Ovary (tissue), 10 donors: ENCODE measurements at regions of chr16 and their contacts with region 1.

Region 1: DNA sequence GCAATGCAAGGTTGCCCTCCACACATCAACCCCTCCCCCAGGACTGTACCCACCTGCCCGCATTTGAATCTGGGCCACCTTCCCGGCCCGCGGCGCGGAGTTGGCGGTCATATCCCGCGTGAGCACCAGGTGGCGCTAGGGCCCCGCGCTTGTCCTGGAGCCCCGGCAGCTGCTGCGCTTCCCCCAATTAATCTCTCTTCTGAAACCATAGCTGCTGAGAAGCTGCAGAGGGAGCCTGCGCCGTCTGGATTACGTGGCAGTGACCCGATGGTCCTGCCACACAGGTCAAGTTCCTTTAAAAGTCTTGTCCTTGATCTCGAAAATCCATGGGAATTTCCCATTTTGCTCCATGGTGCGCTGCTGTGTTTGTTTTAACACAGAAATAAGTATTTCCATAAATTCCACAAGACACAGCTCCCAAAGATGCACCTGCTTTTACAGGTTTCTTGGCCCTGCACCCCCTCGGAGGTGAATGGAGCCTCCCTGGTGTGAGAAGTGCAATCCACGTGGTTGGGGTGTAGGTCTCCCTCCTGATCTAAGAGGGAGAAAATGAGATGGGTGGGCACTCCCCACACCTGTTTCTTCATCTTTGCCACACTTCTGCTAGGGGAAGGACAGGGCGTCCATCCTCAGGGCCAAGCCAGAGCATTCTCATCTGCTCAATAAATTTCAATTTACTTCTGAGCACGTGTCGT is 22.1 kb downstream of the COX4I1 start:
- DNase-seq: peak; percentile 57 to 85 (median 72)
- H3K4me3 ChIP-seq: no peak overlapping the region
- H3K27ac ChIP-seq: no peak overlapping the region
- H3K4me1 ChIP-seq: no peaks in the 10 kb centered on the region
- H3K27me3 ChIP-seq: no peaks in the 10 kb centered on the region
- CTCF ChIP-seq: peak; percentile 81 to 97 (median 96)
- EP300 ChIP-seq: no peak
- POLR2A ChIP-seq: no peak

Region 2: DNA sequence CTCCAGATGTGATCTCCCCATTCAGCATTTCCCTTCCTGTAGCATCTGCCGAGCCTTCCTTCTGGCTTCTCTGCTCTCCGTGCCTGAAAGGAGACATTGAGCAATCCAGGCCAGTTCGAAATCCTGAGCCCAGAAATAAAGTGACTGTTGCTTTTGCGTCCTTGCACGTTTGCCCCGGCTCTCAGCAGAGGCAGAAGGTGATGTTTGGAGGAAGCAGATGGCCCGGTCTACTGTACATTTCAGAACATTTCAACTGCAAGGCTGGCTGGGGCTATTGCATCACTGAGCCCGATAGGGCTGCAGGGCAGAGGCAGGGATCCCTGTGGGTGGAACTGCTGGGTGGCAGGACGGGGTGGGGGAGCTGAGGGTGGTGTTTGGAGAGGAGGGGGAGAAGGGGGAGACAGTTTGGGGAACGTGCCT is 106.8 kb after region 1 on chr16:
- intact Hi-C with region 1: loop called in 1 of 4 experiments (anchors 10 kb)
- DNase-seq: peak; percentile 30 to 64 (median 56)
- H3K4me3 ChIP-seq: no peak overlapping the region
- H3K27ac ChIP-seq: no peak overlapping the region
- H3K4me1 ChIP-seq: peaks cover 12% of the 10 kb centered on the region
- H3K27me3 ChIP-seq: no peaks in the 10 kb centered on the region
- CTCF ChIP-seq: no peak
- EP300 ChIP-seq: no peak
- POLR2A ChIP-seq: no peak

Region 3: DNA sequence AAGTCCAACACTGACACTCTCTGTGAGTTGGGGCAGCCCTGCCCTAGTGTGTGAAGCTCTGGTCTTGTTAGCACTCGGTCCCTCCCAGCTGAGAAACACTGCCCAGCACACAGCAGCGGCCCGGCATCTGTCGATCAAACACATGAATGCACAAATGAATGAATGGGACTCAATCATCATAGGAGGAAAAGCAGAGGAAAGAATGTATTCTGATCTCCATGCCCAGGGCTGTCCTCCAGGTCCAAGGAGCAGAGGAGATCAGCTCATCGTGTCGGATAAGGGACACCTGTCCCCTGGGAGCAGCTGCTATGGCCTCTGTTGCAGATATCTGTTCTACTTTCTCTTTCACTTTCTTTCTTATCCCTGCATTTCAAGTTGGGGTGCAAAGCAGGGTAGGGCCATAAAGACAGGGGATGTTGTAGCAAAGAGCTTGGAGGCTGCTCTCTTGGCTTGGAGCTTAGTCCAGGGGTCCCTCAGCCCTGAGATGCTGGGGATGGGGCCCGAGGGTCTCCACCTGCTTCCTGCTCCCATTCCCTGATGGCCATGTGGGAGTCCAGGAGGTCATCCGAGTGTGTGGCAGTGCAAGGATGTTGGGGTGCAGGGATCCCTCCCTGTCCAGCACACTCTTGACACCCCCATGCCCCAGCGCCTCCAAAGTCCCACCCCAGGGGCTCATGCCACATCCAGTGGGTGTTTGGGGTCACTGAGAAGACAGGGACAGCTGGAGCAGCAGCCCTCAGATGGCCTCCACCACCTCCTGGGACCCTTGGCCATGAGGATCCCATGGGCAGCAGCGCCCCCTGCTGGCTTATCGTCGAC is 165.6 kb after region 1 on chr16:
- intact Hi-C with region 1: loop called in 3 of 4 experiments (anchors 5 to 10 kb)
- DNase-seq: no peak
- H3K4me3 ChIP-seq: no peak overlapping the region
- H3K27ac ChIP-seq: no peak overlapping the region
- H3K4me1 ChIP-seq: no peaks in the 10 kb centered on the region
- H3K27me3 ChIP-seq: no peaks in the 10 kb centered on the region
- CTCF ChIP-seq: peak in 1 of 3 donors; percentile 44
- EP300 ChIP-seq: no peak
- POLR2A ChIP-seq: no peak

Region 4: DNA sequence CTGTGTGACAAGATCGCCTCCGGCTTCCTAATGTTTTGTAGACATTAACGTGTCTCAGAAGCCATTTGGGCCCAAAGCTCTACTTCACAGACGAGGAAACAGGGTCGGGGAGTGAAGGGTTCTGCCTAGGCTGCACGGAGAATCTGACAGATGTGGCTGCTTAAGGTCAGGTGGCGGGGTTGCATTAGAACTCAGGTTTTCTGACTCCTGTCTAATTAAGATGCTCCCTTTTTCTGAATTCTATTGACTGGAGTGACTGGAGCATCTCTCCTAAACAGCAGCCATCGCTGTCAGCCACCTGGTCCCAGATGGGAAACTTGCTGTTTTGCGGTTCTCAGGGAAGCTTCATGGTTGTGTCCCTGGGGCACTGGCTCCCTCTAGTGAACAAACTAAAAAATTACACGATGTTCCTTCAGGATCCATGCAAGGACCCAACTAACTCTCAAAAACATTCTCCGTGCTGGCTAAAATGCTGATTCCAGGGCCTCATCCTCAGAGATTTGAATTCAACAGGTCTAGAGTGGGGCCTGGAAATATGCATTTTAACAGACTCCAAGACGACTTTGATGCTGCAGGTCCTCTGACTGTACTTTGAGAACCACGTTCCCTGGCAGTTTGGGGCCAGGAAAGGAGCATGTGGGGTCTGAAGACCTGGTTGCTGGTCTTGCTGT is 194.7 kb after region 1 on chr16:
- intact Hi-C with region 1: loop called (anchors 1 to 10 kb)
- DNase-seq: peak in 4 of 5 donors; percentile 19 to 40 (median 28)
- H3K4me3 ChIP-seq: no peak overlapping the region
- H3K27ac ChIP-seq: no peak overlapping the region
- H3K4me1 ChIP-seq: no peaks in the 10 kb centered on the region
- H3K27me3 ChIP-seq: no peaks in the 10 kb centered on the region
- CTCF ChIP-seq: peak; percentile 28 to 71 (median 29)
- EP300 ChIP-seq: no peak
- POLR2A ChIP-seq: no peak

Region 5: GRCh38 chr16:86519649-86520316 is 698.2 kb after region 1 on chr16:
- intact Hi-C with region 1: loop called (anchors 2 to 10 kb)
- DNase-seq: peak; percentile 24 to 71 (median 60)
- H3K4me3 ChIP-seq: no peak overlapping the region
- H3K27ac ChIP-seq: no peak overlapping the region
- H3K4me1 ChIP-seq: peaks cover 2% of the 10 kb centered on the region
- H3K27me3 ChIP-seq: no peaks in the 10 kb centered on the region
- CTCF ChIP-seq: peak; percentile 55 to 70 (median 61)
- EP300 ChIP-seq: no peak
- POLR2A ChIP-seq: no peak